ENCODE measurements at regions of chr3 and their contacts with region 1.

Region 1: DNA sequence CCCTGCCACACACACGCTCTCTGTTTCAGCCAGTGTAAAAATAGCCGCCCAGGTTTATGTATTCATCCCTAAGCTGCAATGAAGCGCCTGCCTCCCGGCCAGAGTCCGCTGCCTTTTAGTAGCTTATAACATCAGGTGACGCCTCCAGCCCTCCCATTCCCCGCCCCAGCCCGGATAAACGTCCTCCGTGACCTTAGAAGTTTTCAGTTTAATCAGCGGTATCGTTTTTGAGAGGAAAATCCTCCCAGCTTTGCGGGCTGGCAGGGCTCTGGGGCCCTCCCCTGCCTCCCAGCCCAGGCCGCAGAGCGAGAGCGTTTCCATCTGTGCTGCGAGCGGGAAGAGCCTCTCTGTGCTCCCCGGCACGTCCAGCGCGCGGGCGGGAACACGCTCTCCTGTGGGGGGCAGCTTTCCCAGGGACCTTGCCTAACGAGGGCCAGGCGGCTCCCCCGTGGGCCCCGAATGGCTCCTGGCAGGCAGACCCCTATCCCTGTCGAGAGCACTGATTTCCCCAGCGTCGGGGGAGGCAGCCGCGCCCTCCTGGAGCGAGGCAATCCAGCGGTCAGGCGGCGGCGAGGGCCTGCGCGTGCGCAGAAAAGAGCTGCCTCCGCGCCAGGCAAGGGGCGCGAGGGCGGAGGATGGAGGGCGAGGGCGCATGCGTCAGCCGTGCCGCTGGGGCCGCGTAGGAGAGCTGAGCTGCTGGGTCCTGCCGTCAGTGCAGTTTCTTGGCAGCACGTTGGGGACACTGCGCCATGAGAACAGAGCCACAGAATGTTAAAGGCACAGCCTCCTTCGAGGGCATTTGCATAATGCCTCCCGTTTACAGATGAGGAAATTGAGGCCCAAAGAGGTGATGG is 71.1 kb downstream of the CCNL1 start:
- DNase-seq: peak; percentile 97
- ATAC-seq: peak; percentile 86
- H3K4me3 Mint-ChIP-seq: peak overlapping the region; percentile 74
- H3K27ac Mint-ChIP-seq: peak overlapping the region; percentile 96
- H3K4me1 Mint-ChIP-seq: peaks cover 64% of the 10 kb centered on the region
- H3K27me3 Mint-ChIP-seq: no peaks in the 10 kb centered on the region
- CTCF ChIP-seq: no peak

Region 2: GRCh38 chr3:156816800-156817645 is 271.8 kb before region 1 on chr3:
- CTCF ChIA-PET with region 1: interaction called, 3 read pairs
- POLR2A ChIA-PET with region 1: interaction called, 3 read pairs
- intact Hi-C with region 1: loop called (anchors 5 kb)
- DNase-seq: peak; percentile 89
- ATAC-seq: peak; percentile 77
- H3K4me3 Mint-ChIP-seq: peak overlapping the region; percentile 80
- H3K27ac Mint-ChIP-seq: peak overlapping the region; percentile 98
- H3K4me1 Mint-ChIP-seq: peaks cover 47% of the 10 kb centered on the region
- H3K27me3 Mint-ChIP-seq: no peaks in the 10 kb centered on the region
- CTCF ChIP-seq: no peak

Region 3: DNA sequence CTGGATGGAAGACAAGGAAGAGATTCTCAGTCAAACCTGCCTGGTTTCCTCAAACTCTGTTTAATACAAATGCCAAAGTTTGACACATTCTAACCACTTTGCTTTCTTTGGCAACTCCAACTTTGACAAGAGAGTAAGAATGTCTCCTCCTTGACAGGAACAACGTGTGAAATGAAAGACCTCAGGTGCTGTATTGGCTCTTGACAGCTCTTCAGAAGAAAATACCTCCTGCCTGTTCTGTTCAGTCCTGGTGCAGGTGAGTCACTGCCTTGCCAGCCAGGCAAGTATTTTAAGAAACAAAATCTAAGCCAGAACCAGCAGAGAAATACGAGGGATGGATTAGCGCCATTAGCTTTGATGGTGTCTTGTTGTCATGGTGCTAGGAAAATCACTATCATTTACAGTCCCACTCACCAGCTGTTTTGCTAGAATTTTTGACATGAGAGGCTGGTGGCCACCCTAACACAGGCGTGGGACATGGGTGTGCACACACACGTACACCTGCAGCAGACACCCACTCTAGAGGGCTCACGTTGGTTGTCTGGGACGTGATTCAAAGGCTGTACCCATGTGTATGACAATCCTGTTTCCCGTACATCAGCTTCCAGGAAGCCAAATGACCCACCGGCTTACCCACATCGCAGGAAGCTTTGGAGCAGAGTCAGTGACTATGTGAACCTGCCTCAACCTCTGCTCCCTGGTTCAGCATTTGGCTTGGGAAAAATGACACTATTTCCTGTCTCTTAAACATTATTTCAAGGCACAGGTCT is 10.7 kb after region 1 on chr3:
- CTCF ChIA-PET with region 1: interaction called, 13 read pairs
- POLR2A ChIA-PET with region 1: interaction called, 5 read pairs
- intact Hi-C with region 1: no loop called
- DNase-seq: no peak
- ATAC-seq: peak; percentile 22
- H3K4me3 Mint-ChIP-seq: no peak overlapping the region
- H3K27ac Mint-ChIP-seq: no peak overlapping the region
- H3K4me1 Mint-ChIP-seq: peaks cover 29% of the 10 kb centered on the region
- H3K27me3 Mint-ChIP-seq: no peaks in the 10 kb centered on the region
- CTCF ChIP-seq: no peak

Region 4: DNA sequence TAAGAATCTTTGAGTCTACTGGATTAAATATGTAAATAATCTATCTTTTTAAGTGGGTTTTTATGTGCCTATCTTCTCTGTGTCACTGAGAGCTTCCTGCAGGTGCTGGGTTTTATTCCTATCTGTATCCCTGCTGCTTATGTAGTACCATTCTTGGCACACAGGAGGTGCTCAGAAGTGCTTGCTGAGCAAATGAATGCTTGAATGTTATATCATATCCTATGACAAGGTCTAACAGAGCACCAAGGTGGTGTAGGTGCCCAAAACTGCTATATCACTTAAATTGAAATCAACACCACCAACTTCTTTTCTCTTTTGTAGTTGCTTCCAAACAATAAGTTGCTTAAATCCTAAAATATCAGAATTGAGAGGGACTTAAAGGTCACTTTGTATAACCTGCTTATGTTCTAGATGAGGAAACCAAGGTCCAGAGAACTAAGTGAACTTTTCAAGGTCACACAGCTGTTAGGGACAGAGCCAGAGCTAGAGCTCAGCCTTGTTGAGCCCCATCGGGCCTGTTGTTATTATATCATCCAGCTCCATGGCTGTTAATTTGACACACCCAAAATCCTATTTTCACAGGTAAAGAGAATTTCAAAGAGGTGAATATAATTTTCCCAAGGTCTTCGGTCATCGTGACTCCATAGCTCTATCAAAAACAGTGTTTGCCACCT is 25.1 kb after region 1 on chr3:
- CTCF ChIA-PET with region 1: interaction called, 15 read pairs
- POLR2A ChIA-PET with region 1: interaction called, 6 read pairs
- intact Hi-C with region 1: no loop called
- DNase-seq: peak; percentile 30
- ATAC-seq: peak; percentile 86
- H3K4me3 Mint-ChIP-seq: no peak overlapping the region
- H3K27ac Mint-ChIP-seq: no peak overlapping the region
- H3K4me1 Mint-ChIP-seq: peaks cover 9% of the 10 kb centered on the region
- H3K27me3 Mint-ChIP-seq: no peaks in the 10 kb centered on the region
- CTCF ChIP-seq: peak; percentile 14

Region 5: DNA sequence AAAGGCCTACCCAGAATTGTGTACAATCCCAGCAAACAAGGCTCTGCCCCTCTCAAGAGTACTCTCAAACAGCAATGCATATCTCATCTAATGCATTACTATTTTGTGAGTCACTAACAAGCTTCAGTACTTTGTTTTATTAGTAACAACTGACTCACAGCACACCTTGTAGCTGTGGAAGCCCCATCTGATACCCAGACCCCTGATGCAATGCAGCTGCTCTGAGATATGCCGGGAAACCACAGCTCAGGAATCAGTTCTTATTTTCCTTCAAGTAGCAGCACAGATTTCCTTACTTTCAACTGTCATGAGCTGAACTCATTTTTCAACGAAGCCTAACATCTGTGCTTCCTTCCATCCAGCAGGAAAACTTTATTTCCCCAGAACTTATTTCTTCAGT is 33.3 kb after region 1 on chr3:
- CTCF ChIA-PET with region 1: interaction called, 84 read pairs
- POLR2A ChIA-PET with region 1: interaction called, 32 read pairs
- intact Hi-C with region 1: no loop called
- DNase-seq: no peak
- ATAC-seq: peak; percentile 37
- H3K4me3 Mint-ChIP-seq: no peak overlapping the region
- H3K27ac Mint-ChIP-seq: no peak overlapping the region
- H3K4me1 Mint-ChIP-seq: peaks cover 24% of the 10 kb centered on the region
- H3K27me3 Mint-ChIP-seq: no peaks in the 10 kb centered on the region
- CTCF ChIP-seq: no peak

Region 6: GRCh38 chr3:157130467-157131251 is 41.8 kb after region 1 on chr3:
- CTCF ChIA-PET with region 1: interaction called, 84 read pairs
- POLR2A ChIA-PET with region 1: interaction called, 32 read pairs
- intact Hi-C with region 1: loop called (anchors 2 kb)
- DNase-seq: peak; percentile 90
- ATAC-seq: peak; percentile 26
- H3K4me3 Mint-ChIP-seq: peak overlapping the region; percentile 50
- H3K27ac Mint-ChIP-seq: peak overlapping the region; percentile 96
- H3K4me1 Mint-ChIP-seq: peaks cover 74% of the 10 kb centered on the region
- H3K27me3 Mint-ChIP-seq: no peaks in the 10 kb centered on the region
- CTCF ChIP-seq: peak; percentile 77

Region 7: DNA sequence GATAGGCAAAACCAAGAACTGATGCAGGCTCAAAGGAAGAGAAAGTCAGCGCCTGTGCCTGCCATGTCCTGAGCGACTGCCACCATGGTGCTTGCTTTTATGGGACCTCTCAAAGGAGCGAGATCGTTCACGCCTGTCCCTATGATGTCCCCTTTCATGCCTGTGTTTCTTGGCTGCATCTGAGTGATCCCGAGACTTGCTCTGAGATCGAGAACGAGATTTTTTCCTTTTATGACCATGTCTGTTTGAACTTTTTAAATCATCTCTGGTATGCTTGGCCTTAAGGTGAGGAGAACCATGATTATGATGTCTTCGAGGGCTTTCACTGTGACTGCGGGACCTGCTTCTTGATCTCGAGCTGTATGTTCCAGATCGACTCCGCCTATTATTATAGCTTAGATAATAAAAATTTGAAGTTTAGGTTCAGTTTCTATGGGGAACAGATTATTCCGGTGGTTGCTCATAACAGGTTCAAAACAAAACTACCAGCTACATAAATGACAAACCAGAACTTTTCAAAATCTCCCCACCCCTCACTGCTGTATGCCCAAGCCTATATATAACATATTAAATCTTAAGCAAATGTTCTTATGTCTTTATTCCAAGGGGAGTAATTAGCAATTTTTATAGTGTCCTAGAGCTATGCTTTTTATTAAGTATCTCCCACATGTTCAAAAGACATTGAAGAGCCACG is 59.5 kb after region 1 on chr3:
- CTCF ChIA-PET with region 1: interaction called, 5 read pairs
- POLR2A ChIA-PET with region 1: interaction called, 12 read pairs
- intact Hi-C with region 1: no loop called
- DNase-seq: no peak
- ATAC-seq: peak; percentile 22
- H3K4me3 Mint-ChIP-seq: no peak overlapping the region
- H3K27ac Mint-ChIP-seq: peak overlapping the region; percentile 73
- H3K4me1 Mint-ChIP-seq: peaks cover 46% of the 10 kb centered on the region
- H3K27me3 Mint-ChIP-seq: no peaks in the 10 kb centered on the region
- CTCF ChIP-seq: no peak

Region 8: DNA sequence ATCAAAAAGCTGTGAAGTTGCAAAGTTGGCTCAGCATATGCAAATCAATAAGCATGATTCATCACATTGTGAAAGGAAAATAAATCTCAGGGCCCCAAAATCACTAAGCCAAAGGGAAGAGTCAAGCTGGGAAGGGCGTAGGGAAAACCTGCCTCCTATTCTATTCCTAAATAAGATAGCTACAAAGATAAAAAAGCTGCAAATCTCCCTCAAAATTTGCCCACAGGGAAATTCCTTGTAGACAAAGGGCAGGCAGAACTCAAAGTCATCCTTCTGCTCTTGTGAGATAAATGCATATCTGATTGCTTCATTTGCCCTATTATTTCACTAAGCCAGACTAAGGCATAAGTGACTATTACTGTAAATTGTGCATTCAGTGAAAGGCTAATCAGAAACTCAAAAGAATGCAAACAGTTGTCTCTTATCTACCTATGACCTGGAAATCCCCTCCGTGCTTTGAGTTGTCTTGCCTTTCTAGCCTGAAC is 101.6 kb after region 1 on chr3:
- CTCF ChIA-PET with region 1: no interaction called
- POLR2A ChIA-PET with region 1: no interaction called
- intact Hi-C with region 1: no loop called
- DNase-seq: no peak
- ATAC-seq: no peak
- H3K4me3 Mint-ChIP-seq: no peak overlapping the region
- H3K27ac Mint-ChIP-seq: no peak overlapping the region
- H3K4me1 Mint-ChIP-seq: no peaks in the 10 kb centered on the region
- H3K27me3 Mint-ChIP-seq: no peaks in the 10 kb centered on the region
- CTCF ChIP-seq: no peak

Region 9: GRCh38 chr3:157405457-157405856 is 316.6 kb after region 1 on chr3:
- CTCF ChIA-PET with region 1: no interaction called
- POLR2A ChIA-PET with region 1: no interaction called
- intact Hi-C with region 1: no loop called
- DNase-seq: no peak
- ATAC-seq: no peak
- H3K4me3 Mint-ChIP-seq: no peak overlapping the region
- H3K27ac Mint-ChIP-seq: no peak overlapping the region
- H3K4me1 Mint-ChIP-seq: no peaks in the 10 kb centered on the region
- H3K27me3 Mint-ChIP-seq: no peaks in the 10 kb centered on the region
- CTCF ChIP-seq: no peak